Right cardiac atrium (tissue), 5 donors: ENCODE measurements at regions of chr12 and their contacts with region 1.

Region 1: DNA sequence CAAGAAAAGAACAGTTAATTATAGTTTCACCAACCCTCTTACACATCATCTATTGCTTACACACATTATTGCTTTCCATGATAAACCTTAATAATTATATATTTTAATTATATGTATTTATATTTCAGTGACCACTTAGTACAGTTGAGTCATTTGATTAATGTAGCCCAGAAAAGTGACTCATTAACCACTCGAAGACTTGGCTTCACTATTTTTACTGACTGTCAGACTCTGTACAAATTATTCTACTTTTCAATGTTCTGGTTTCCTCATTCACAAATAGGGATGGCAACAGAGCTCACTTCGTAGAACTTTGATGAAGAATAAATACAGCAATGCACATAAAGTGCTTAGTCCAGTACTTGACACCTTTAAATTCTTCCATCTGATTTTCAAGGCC is 98.3 kb downstream of the CFAP54 start:
- DNase-seq: no peak
- ATAC-seq: no peak
- H3K4me3 ChIP-seq: no peak overlapping the region
- H3K27ac ChIP-seq: no peak overlapping the region
- H3K4me1 ChIP-seq: no peaks in the 10 kb centered on the region
- H3K27me3 ChIP-seq: no peaks in the 10 kb centered on the region

Region 2: DNA sequence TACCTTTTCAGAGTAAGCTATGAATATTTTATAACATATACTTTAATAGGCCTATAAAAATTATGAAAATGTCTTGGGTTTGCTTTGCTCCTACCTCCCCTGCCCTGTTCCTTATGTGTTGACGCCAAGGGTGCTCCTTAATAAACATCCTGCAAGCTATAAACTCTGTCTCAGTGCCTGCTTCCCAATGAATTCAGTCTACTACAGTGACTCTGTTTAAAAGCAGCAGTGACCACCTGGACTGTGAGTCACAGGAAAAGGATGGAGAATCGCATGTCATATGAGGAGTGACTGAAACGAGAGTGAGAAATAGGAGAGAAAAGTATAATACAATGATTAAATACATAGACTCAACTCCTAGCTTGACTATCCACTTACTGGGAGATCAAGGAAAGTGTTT is 139.4 kb before region 1 on chr12:
- intact Hi-C with region 1: no loop called
- DNase-seq: no peak
- ATAC-seq: no peak
- H3K4me3 ChIP-seq: no peak overlapping the region
- H3K27ac ChIP-seq: no peak overlapping the region
- H3K4me1 ChIP-seq: no peaks in the 10 kb centered on the region
- H3K27me3 ChIP-seq: no peaks in the 10 kb centered on the region

Region 3: DNA sequence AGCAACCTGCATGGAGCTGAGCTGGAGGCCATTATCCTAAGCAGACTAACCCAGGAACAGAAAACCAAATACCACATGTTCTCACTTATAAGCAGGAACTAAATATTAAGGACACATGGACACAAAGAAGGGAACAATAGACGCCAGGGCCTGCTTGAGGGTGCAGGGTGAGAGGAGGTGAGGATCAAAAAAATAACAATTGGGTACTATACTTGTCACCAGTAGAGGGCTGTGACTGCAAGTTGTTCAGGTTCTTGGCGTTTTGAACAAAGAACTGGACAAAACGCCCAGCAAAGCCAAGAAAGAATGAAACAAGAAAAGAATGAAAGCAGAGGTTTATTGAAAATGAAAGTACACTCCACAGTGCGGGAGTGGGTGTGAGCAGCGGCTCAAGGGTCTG is 110.8 kb after region 1 on chr12:
- intact Hi-C with region 1: no loop called
- DNase-seq: no peak
- ATAC-seq: no peak
- H3K4me3 ChIP-seq: no peak overlapping the region
- H3K27ac ChIP-seq: no peak overlapping the region
- H3K4me1 ChIP-seq: no peaks in the 10 kb centered on the region
- H3K27me3 ChIP-seq: no peaks in the 10 kb centered on the region

Region 4: DNA sequence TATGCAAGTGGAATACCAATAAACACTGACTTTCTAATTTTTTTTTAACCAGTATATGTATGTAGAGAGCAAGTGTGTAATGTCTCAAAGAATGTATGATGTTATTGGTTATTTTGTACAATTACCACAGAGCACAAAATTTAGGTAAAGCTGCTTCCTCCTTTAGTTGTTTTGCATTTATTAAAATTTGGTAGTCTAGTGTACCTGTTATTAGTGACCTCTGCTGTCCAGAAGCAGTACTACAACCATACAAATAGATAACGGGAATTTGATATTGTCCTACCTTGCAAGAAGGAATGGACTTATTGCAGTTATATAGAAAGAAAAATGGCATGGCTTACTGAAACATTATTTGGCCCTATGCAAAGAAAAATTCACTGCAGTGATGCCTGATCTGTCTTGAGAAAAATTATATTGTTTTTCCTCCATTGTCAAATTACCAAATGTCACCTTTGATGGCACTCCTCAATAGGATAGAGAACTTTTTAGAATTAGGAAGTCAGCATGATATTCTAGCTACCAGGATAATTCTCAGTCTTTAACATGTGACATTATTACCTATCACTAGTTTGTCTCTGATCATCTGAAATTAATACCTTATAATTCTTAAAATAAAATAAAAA is 721.0 kb after region 1 on chr12:
- intact Hi-C with region 1: loop called in 2 of 4 experiments (anchors 10 kb)
- DNase-seq: no peak
- ATAC-seq: no peak
- H3K4me3 ChIP-seq: no peak overlapping the region
- H3K27ac ChIP-seq: no peak overlapping the region
- H3K4me1 ChIP-seq: no peaks in the 10 kb centered on the region
- H3K27me3 ChIP-seq: peaks cover 2% of the 10 kb centered on the region

Region 5: DNA sequence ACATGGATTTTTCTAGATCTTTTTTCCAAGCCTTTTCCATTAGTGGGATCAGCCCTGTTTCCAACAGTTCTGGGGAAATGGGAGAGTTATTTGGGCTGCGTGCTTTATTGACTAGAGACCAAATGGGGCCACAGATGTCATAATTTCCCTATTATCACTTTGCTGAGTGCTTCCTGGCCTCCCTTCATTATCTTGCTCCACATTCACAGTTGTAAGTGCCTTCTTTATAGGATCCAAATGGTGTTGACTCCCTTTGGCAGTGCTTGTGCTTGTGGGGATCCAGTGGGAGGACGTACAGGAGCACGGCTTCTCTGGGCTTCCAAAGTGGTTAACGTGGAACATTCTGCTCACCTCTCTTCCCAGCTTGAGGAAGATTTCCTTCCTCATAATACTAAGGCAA is 733.9 kb after region 1 on chr12:
- intact Hi-C with region 1: loop called in 1 of 4 experiments (anchors 10 kb)
- DNase-seq: peak in 1 of 3 donors; percentile 25
- ATAC-seq: peak in 1 of 2 donors; percentile 64
- H3K4me3 ChIP-seq: no peak overlapping the region
- H3K27ac ChIP-seq: no peak overlapping the region
- H3K4me1 ChIP-seq: no peaks in the 10 kb centered on the region
- H3K27me3 ChIP-seq: no peaks in the 10 kb centered on the region

Region 6: GRCh38 chr12:98397316-98398105 is 1809.8 kb after region 1 on chr12:
- intact Hi-C with region 1: loop called in 1 of 4 experiments (anchors 10 kb)
- DNase-seq: peak; percentile 77 to 91 (median 89)
- ATAC-seq: peak; percentile 96
- H3K4me3 ChIP-seq: peak overlapping the region; percentile 82
- H3K27ac ChIP-seq: no peak overlapping the region
- H3K4me1 ChIP-seq: no peaks in the 10 kb centered on the region
- H3K27me3 ChIP-seq: no peaks in the 10 kb centered on the region